ENCODE measurements at regions of chr19 and their contacts with region 1.

Region 1: DNA sequence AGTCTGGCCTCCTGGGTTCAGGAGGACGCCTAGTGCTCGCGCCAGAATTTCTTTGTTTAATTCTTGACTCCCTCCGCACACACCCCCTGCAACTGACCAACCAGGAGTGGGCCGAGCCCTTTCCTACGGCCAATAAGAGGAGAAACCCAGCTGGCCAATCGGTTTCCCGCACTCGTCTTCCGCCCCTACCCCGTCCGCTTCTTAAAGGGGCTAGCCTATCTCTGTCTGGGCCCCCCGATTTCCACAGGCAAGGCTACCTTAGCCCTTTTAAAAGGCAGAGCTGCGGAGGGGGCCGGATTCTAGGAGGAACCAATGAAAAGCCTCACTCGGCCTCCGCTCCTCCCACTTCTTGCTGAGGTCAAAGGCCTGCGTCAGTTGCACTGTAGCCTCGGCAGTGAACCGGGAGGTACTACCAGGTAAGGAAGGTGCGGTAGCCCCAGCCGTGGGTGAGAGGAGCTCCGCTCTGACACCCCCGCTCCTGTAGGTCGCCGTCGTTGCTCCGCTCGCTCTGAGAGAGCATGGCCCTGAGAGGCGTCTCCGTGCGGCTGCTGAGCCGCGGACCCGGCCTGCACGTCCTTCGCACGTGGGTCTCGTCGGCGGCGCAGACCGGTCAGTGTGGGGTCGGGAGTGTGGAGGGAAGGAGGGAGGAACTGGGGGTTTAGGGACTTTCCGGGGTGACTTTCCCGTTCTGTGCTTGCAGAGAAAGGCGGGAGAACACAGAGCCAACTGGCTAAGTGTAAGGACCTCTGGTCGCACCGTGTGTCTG is at the start of gene GCDH:
- DNase-seq: peak; percentile 90 to 99 (median 94)
- ATAC-seq: peak; percentile 89
- H3K4me3 ChIP-seq: peak within 1 kb of the TSS; percentile 89
- H3K4me3 Mint-ChIP-seq: peak within 1 kb of the TSS; percentile 96
- H3K27ac ChIP-seq: peak within 1 kb of the TSS; percentile 67 to 68
- H3K27ac Mint-ChIP-seq: peak within 1 kb of the TSS; percentile 90
- H3K4me1 ChIP-seq: peaks cover 25% of the 10 kb centered on the region
- H3K4me1 Mint-ChIP-seq: peaks cover 31% of the 10 kb centered on the region
- H3K27me3 ChIP-seq: no peaks in the 10 kb centered on the region
- H3K27me3 Mint-ChIP-seq: no peaks in the 10 kb centered on the region
- CTCF ChIP-seq: no peak
- total RNA-seq, gene GCDH: 39.2 to 42.1 TPM

Region 2: DNA sequence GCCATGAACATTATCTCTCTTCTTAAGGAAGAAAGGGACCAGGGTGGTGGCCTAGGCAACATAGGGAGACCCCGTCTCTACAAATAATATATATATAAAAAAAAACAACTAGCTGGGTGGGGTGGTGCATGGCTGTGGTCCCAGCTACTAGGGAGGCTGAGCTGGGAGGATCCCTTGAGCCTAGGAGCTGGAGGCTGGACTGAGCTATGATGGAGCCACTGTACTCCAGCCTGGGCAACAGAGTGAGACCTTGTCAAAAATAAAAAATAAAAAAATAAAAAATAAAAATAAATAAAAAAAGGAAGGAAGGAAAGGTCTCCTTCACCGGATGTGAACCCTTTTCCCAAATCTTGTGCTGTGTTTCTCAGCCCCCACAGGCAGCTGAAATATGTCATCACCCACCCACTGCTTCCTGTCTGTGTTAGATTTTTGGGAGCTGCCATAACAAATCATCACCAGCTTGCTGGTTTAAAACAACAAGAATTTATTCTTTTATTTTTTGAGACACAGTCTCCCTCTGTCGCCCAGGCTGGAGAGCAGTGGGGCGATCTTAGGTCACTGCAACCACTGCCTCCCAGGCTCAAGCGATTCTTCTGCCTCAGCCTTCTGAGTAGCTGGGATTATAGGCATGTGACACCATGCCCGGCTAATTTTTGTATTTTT is 1604.5 kb before region 1 on chr19:
- CTCF ChIA-PET with region 1: no interaction called
- POLR2A ChIA-PET with region 1: no interaction called
- intact Hi-C with region 1: no loop called
- DNase-seq: no peak
- ATAC-seq: no peak
- H3K4me3 ChIP-seq: no peak overlapping the region
- H3K4me3 Mint-ChIP-seq: no peak overlapping the region
- H3K27ac ChIP-seq: no peak overlapping the region
- H3K27ac Mint-ChIP-seq: no peak overlapping the region
- H3K4me1 ChIP-seq: no peaks in the 10 kb centered on the region
- H3K4me1 Mint-ChIP-seq: peaks cover 4% of the 10 kb centered on the region
- H3K27me3 ChIP-seq: peaks cover 22 to 32% of the 10 kb centered on the region in 2 experiments
- H3K27me3 Mint-ChIP-seq: peaks cover 57% of the 10 kb centered on the region
- CTCF ChIP-seq: no peak

Region 3: GRCh38 chr19:12715102-12715501 is 175.9 kb before region 1 on chr19:
- CTCF ChIA-PET with region 1: no interaction called
- POLR2A ChIA-PET with region 1: no interaction called
- intact Hi-C with region 1: no loop called
- DNase-seq: peak in 1 of 14 experiments; percentile 21
- ATAC-seq: no peak
- H3K4me3 ChIP-seq: no peak overlapping the region
- H3K4me3 Mint-ChIP-seq: no peak overlapping the region
- H3K27ac ChIP-seq: no peak overlapping the region
- H3K27ac Mint-ChIP-seq: no peak overlapping the region
- H3K4me1 ChIP-seq: peaks cover 1% of the 10 kb centered on the region
- H3K4me1 Mint-ChIP-seq: peaks cover 12% of the 10 kb centered on the region
- H3K27me3 ChIP-seq: no peaks in the 10 kb centered on the region
- H3K27me3 Mint-ChIP-seq: no peaks in the 10 kb centered on the region
- CTCF ChIP-seq: no peak

Region 4: GRCh38 chr19:12913011-12913561 is 22.1 kb after region 1 on chr19:
- CTCF ChIA-PET with region 1: interaction called, 4 read pairs
- POLR2A ChIA-PET with region 1: interaction called, 47 read pairs
- intact Hi-C with region 1: loop called (anchors 1 to 2 kb)
- DNase-seq: no peak
- ATAC-seq: no peak
- H3K4me3 ChIP-seq: no peak overlapping the region
- H3K4me3 Mint-ChIP-seq: no peak overlapping the region
- H3K27ac ChIP-seq: no peak overlapping the region
- H3K27ac Mint-ChIP-seq: peak overlapping the region; percentile 91
- H3K4me1 ChIP-seq: peaks cover 23% of the 10 kb centered on the region
- H3K4me1 Mint-ChIP-seq: peaks cover 27% of the 10 kb centered on the region
- H3K27me3 ChIP-seq: no peaks in the 10 kb centered on the region
- H3K27me3 Mint-ChIP-seq: no peaks in the 10 kb centered on the region
- CTCF ChIP-seq: no peak

Region 5: DNA sequence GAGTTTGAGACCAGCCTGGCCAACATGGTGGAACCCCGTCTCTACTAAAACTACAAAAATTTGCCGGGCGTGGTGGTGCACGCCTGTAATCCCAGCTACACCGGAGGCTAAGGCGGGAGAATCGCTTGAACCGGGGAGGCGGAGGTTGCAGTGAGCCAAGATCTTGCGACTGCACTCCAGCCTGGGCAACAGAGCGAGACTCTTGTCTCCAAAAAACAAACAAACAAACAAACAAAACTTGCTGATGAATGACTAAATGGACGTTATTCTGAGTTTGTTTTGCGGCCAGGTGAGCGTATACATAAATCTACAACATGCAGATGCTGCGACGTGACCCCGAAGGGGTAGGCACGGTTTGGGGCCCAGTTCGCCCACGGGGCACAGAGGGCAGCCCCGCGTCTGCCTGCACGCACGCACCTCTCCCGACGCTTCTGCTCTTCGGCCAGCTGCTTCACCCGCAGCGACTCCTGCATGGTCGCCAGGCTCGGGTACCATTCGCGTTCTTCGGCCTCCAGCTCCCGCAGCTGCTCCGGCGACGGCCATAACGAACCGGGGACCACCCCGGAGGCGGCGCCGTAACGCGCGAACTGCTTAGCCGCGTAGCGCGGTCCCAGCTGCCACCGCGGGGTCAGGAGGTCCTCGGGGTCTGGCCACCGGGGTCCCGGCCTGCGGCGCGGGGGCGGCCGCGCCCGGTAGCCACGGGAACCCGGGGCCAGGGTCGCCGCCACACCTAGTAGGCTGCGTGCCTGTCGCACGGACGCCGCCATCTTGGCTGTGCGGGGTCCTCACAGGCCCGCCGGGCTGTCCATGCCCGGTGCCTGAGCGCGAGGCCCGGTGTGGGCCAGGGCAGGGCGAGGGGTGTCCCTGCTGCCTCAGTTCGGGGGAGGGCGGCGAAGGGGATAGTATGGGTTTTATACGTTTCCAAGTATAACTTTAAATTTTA is 65.7 kb after region 1 on chr19 and contains the start of gene GADD45GIP1:
- CTCF ChIA-PET with region 1: no interaction called
- POLR2A ChIA-PET with region 1: interaction called, 6 read pairs
- intact Hi-C with region 1: loop called in 1 of 2 experiments (anchors 2 kb)
- DNase-seq: peak; percentile 65 to 89 (median 78)
- ATAC-seq: peak; percentile 96
- H3K4me3 ChIP-seq: peak within 1 kb of the TSS; percentile 91
- H3K4me3 Mint-ChIP-seq: peak within 1 kb of the TSS; percentile 90
- H3K27ac ChIP-seq: peak within 1 kb of the TSS; percentile 62 to 82
- H3K27ac Mint-ChIP-seq: peak within 1 kb of the TSS; percentile 88
- H3K4me1 ChIP-seq: peaks cover 38% of the 10 kb centered on the region
- H3K4me1 Mint-ChIP-seq: peaks cover 19% of the 10 kb centered on the region
- H3K27me3 ChIP-seq: no peaks in the 10 kb centered on the region
- H3K27me3 Mint-ChIP-seq: no peaks in the 10 kb centered on the region
- CTCF ChIP-seq: no peak
- total RNA-seq, gene GADD45GIP1: 12.1 to 12.8 TPM

Region 6: GRCh38 chr19:13396250-13397080 is 505.5 kb after region 1 on chr19:
- CTCF ChIA-PET with region 1: no interaction called
- POLR2A ChIA-PET with region 1: no interaction called
- intact Hi-C with region 1: no loop called
- DNase-seq: peak in 2 of 14 experiments; percentile 3 to 27
- ATAC-seq: no peak
- H3K4me3 ChIP-seq: no peak overlapping the region
- H3K4me3 Mint-ChIP-seq: no peak overlapping the region
- H3K27ac ChIP-seq: no peak overlapping the region
- H3K27ac Mint-ChIP-seq: no peak overlapping the region
- H3K4me1 ChIP-seq: peaks cover 2% of the 10 kb centered on the region
- H3K4me1 Mint-ChIP-seq: no peaks in the 10 kb centered on the region
- H3K27me3 ChIP-seq: peaks cover 13 to 23% of the 10 kb centered on the region in 2 experiments
- H3K27me3 Mint-ChIP-seq: peaks cover 66% of the 10 kb centered on the region
- CTCF ChIP-seq: no peak